Activated CD8-positive, alpha-beta T cell treated with anti-CD3 and anti-CD28 coated beads for 36 hours (primary cell): ENCODE measurements at regions of chr3 and their contacts with region 1.

Region 1: GRCh38 chr3:133487920-133488540 is 85.5 kb upstream of the CDV3 start:
- DNase-seq: peak; percentile 70
- ATAC-seq: no peak
- H3K4me3 Mint-ChIP-seq: no peak overlapping the region
- H3K27ac Mint-ChIP-seq: no peak overlapping the region
- H3K4me1 Mint-ChIP-seq: peaks cover 56% of the 10 kb centered on the region
- H3K27me3 Mint-ChIP-seq: no peaks in the 10 kb centered on the region
- CTCF ChIP-seq: peak; percentile 88

Region 2: DNA sequence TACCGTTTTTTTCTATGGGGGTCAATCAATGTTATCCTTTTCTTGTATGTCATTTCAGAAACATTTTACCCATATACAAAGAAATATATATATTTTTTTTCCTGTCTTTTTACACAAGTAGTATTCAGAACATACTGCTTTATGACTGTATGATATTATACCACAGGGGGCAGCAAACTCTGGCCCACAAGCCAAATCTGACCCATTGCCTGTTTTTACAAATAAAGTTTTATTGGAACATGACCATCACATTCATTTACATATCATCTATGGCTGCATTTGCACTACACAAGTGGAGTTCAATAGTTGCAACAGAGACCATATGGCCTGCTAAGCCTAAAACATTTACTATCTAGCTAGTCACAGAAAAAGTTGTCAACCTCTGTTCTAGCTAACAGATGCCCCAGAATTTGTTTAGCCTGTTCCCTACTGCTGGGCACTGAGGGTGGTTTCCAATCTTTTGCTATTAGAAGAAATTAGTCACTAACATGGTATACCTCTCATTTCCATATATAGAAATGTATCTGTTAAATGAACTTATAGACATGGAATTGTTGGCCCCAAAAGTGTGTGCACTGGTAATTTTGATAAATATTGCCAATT is 30.5 kb before region 1 on chr3:
- CTCF ChIA-PET with region 1: interaction called, 37 read pairs
- POLR2A ChIA-PET with region 1: no interaction called
- intact Hi-C with region 1: no loop called
- DNase-seq: no peak
- ATAC-seq: peak; percentile 46
- H3K4me3 Mint-ChIP-seq: no peak overlapping the region
- H3K27ac Mint-ChIP-seq: no peak overlapping the region
- H3K4me1 Mint-ChIP-seq: peaks cover 15% of the 10 kb centered on the region
- H3K27me3 Mint-ChIP-seq: no peaks in the 10 kb centered on the region
- CTCF ChIP-seq: peak; percentile 49

Region 3: GRCh38 chr3:133466531-133467386 is 21.3 kb before region 1 on chr3:
- CTCF ChIA-PET with region 1: interaction called, 50 read pairs
- POLR2A ChIA-PET with region 1: interaction called, 3 read pairs
- intact Hi-C with region 1: no loop called
- DNase-seq: no peak
- ATAC-seq: peak; percentile 35
- H3K4me3 Mint-ChIP-seq: no peak overlapping the region
- H3K27ac Mint-ChIP-seq: no peak overlapping the region
- H3K4me1 Mint-ChIP-seq: peaks cover 36% of the 10 kb centered on the region
- H3K27me3 Mint-ChIP-seq: no peaks in the 10 kb centered on the region
- CTCF ChIP-seq: no peak

Region 4: DNA sequence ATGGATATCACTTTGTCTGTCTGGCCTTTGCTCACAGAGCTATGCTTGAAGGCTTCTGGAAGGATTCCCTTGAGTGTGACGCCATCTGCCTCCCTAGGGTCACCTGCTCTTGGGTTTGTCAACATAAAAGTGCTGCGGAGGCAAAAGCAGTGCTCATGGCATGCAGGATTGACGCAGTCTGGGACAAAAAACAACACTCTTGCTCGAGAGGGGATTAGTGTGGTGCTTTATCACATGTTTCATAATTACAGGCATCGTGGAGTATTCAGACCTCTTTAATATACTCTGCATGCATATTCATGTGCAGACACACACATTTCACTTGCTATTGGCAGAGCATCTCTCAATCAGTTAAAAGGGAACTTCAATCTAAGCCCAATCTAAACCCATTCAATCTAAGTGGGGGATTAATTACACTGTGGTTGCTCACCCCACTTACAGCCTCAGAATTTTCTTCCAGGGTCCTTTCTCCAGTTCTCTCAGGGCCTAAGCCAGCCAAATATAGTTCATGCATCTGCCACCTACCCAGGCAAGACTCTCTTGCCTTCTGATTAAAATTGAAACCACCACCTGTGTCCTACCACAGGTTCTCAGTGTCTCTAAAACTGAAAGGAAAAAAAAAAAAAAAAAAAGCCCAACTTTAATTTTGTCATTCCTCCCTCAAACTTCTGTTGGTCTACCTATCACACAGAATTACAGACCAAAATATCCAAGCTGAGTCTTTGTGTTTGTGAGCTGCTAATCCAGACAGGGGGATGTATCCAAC is 12.6 kb before region 1 on chr3:
- CTCF ChIA-PET with region 1: interaction called, 54 read pairs
- POLR2A ChIA-PET with region 1: interaction called, 8 read pairs
- intact Hi-C with region 1: no loop called
- DNase-seq: peak; percentile 47
- ATAC-seq: peak; percentile 94
- H3K4me3 Mint-ChIP-seq: no peak overlapping the region
- H3K27ac Mint-ChIP-seq: peak overlapping the region; percentile 68
- H3K4me1 Mint-ChIP-seq: peaks cover 59% of the 10 kb centered on the region
- H3K27me3 Mint-ChIP-seq: no peaks in the 10 kb centered on the region
- CTCF ChIP-seq: no peak

Region 5: GRCh38 chr3:133563186-133563591 is 75.2 kb after region 1 on chr3:
- CTCF ChIA-PET with region 1: interaction called, 16 read pairs
- POLR2A ChIA-PET with region 1: no interaction called
- intact Hi-C with region 1: no loop called
- DNase-seq: no peak
- ATAC-seq: no peak
- H3K4me3 Mint-ChIP-seq: no peak overlapping the region
- H3K27ac Mint-ChIP-seq: no peak overlapping the region
- H3K4me1 Mint-ChIP-seq: no peaks in the 10 kb centered on the region
- H3K27me3 Mint-ChIP-seq: no peaks in the 10 kb centered on the region
- CTCF ChIP-seq: no peak

Region 6: GRCh38 chr3:133573054-133573628 is 85.1 kb after region 1 on chr3:
- CTCF ChIA-PET with region 1: interaction called, 89 read pairs
- POLR2A ChIA-PET with region 1: interaction called, 87 read pairs
- intact Hi-C with region 1: loop called (anchors 2 kb)
- DNase-seq: peak; percentile 100
- ATAC-seq: peak; percentile 85
- H3K4me3 Mint-ChIP-seq: peak overlapping the region; percentile 90
- H3K27ac Mint-ChIP-seq: peak overlapping the region; percentile 100
- H3K4me1 Mint-ChIP-seq: peaks cover 42% of the 10 kb centered on the region
- H3K27me3 Mint-ChIP-seq: no peaks in the 10 kb centered on the region
- CTCF ChIP-seq: peak; percentile 15

Region 7: DNA sequence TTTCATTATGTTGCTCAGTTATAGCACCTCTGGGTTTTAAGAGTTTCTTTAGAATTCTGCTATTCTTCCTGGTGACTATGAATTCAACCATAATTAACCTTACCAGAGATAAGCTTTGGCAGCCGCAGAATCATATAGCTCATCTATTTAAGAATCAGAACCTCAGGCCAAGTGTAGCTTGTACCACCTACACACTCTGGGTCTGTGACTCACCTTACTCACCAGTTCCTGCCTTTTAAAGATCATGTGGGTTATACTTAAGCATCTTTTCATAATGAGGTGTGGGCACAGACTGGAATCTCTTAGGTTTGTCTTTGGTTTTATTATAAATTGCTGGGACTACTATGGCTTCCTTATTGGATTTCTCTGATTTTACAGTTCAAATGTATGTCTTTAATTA is 107.3 kb after region 1 on chr3:
- CTCF ChIA-PET with region 1: interaction called, 13 read pairs
- POLR2A ChIA-PET with region 1: interaction called, 3 read pairs
- intact Hi-C with region 1: no loop called
- DNase-seq: peak; percentile 78
- ATAC-seq: peak; percentile 90
- H3K4me3 Mint-ChIP-seq: no peak overlapping the region
- H3K27ac Mint-ChIP-seq: peak overlapping the region; percentile 68
- H3K4me1 Mint-ChIP-seq: peaks cover 34% of the 10 kb centered on the region
- H3K27me3 Mint-ChIP-seq: no peaks in the 10 kb centered on the region
- CTCF ChIP-seq: no peak

Region 8: GRCh38 chr3:134078169-134078821 is 590.3 kb after region 1 on chr3:
- CTCF ChIA-PET with region 1: no interaction called
- POLR2A ChIA-PET with region 1: no interaction called
- intact Hi-C with region 1: no loop called
- DNase-seq: no peak
- ATAC-seq: no peak
- H3K4me3 Mint-ChIP-seq: no peak overlapping the region
- H3K27ac Mint-ChIP-seq: no peak overlapping the region
- H3K4me1 Mint-ChIP-seq: no peaks in the 10 kb centered on the region
- H3K27me3 Mint-ChIP-seq: no peaks in the 10 kb centered on the region
- CTCF ChIP-seq: no peak